ENCODE measurements at regions of chr12 and their contacts with region 1.

Region 1: DNA sequence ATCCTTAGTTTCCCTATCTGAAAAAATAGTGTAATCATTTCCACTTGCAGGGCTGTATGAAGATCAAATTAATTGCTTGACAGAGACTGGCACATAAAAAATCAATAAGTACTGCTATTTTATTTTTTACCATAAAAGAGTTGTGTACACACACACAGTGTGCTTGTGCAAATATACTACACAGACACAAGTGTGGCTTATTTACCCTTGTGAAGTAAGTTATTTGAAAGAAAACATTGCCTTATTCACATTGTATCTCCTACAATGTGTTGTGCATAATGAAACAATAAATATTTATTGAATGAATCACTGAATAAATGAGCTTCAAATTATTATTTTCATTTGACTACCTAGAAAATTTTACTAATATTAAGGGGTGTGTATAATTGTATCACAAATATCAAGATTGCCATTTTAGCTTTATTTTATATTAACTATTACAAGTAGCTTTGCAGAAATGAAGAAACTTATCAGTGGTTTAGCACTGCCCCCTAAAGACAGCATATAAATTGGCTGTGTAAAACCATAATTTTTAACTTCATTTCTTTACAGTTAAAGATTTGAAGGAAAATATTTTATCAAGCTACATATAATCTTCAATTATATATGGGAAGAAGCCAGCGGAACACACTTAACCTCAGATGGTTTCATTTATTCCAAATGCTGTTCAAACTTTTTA is 11.3 kb downstream of the GARIN6 start:
- DNase-seq: peak; percentile 33
- ATAC-seq: peak; percentile 56
- H3K4me3 ChIP-seq: no peak overlapping the region
- H3K27ac ChIP-seq: no peak overlapping the region
- H3K4me1 ChIP-seq: no peaks in the 10 kb centered on the region
- H3K27me3 ChIP-seq: 0 out of 2 replicates have a peak, but pooled peaks cover 3% of the 10 kb centered on the region
- CTCF ChIP-seq: peak; percentile 70

Region 2: GRCh38 chr12:99043319-99043914 is 615.4 kb before region 1 on chr12:
- CTCF ChIA-PET with region 1: interaction called, 12 read pairs
- POLR2A ChIA-PET with region 1: no interaction called
- intact Hi-C with region 1: loop called (anchors 1 kb)
- DNase-seq: peak; percentile 78
- ATAC-seq: peak; percentile 50; the same call in 1 of the 2 replicates
- H3K4me3 ChIP-seq: no peak overlapping the region
- H3K27ac ChIP-seq: no peak overlapping the region
- H3K4me1 ChIP-seq: no peaks in the 10 kb centered on the region
- H3K27me3 ChIP-seq: peaks cover 9% of the 10 kb centered on the region; the same call in 1 of the 2 replicates
- CTCF ChIP-seq: peak; percentile 92

Region 3: DNA sequence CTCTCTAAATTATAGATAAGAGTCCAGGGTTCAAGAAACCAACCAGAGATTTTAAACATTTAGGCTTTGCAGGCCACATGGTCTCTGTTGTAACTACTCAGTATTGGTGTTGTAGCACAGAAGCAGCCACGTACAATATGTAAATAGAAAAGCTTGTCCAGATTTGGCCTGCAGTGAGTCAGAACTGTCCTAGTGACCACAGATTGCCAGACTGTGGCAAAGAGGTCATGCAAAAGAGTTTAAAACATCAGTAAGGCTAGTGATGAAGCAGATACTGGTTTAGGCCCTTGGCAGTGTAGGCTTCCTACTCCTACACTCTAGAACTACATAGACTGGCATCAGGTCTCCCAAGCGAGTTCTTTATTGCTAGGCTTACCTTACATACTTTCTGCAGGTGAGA is 128.8 kb before region 1 on chr12:
- CTCF ChIA-PET with region 1: no interaction called
- POLR2A ChIA-PET with region 1: no interaction called
- intact Hi-C with region 1: no loop called
- DNase-seq: peak; percentile 54
- ATAC-seq: peak; percentile 95
- H3K4me3 ChIP-seq: no peak overlapping the region
- H3K27ac ChIP-seq: no peak overlapping the region
- H3K4me1 ChIP-seq: no peaks in the 10 kb centered on the region; the same call in 1 of the 2 replicates
- H3K27me3 ChIP-seq: no peaks in the 10 kb centered on the region
- CTCF ChIP-seq: no peak

Region 4: GRCh38 chr12:99596762-99597161 is 62.0 kb before region 1 on chr12:
- CTCF ChIA-PET with region 1: no interaction called
- POLR2A ChIA-PET with region 1: no interaction called
- intact Hi-C with region 1: no loop called
- DNase-seq: no peak
- ATAC-seq: peak; percentile 53; the same call in 1 of the 2 replicates
- H3K4me3 ChIP-seq: no peak overlapping the region
- H3K27ac ChIP-seq: no peak overlapping the region
- H3K4me1 ChIP-seq: no peaks in the 10 kb centered on the region
- H3K27me3 ChIP-seq: peaks cover under 1% of the 10 kb centered on the region; the same call in 1 of the 2 replicates
- CTCF ChIP-seq: no peak